Posterior cingulate gyrus (tissue), 11 donors: ENCODE measurements at regions of chr1 and their contacts with region 1.

Region 1: DNA sequence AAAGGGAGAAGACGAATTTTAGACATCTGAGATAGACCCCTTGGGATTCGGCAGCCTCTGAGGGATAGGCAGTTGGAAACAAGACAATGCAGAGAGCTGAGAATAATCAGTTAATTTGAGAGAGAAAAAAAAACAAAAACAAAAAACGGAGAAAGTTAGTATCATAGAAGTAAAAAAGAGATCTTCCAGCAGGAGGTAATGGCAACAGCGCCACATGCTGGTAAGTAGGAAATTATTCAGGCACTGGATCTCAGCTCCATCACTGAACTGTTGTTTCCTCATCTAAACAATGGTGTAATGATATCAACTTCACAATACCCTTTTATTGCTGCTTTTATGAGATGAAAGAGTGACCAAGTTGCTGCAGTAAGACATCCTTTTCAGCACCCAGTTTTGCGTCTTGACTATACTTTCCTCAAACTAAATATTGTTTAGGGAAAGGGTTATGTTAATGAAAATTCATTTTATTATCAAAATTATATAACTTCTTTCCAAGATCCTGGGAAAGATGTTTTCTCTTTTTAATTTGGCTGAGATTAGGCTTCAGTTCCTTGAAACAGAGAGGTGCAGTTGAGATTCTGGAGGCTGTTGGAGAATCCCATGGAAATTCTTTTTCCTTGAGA is 91.4 kb upstream of the KCNA3 start:
- DNase-seq: peak in 5 of 10 donors; percentile 41 to 84 (median 50)

Region 2: DNA sequence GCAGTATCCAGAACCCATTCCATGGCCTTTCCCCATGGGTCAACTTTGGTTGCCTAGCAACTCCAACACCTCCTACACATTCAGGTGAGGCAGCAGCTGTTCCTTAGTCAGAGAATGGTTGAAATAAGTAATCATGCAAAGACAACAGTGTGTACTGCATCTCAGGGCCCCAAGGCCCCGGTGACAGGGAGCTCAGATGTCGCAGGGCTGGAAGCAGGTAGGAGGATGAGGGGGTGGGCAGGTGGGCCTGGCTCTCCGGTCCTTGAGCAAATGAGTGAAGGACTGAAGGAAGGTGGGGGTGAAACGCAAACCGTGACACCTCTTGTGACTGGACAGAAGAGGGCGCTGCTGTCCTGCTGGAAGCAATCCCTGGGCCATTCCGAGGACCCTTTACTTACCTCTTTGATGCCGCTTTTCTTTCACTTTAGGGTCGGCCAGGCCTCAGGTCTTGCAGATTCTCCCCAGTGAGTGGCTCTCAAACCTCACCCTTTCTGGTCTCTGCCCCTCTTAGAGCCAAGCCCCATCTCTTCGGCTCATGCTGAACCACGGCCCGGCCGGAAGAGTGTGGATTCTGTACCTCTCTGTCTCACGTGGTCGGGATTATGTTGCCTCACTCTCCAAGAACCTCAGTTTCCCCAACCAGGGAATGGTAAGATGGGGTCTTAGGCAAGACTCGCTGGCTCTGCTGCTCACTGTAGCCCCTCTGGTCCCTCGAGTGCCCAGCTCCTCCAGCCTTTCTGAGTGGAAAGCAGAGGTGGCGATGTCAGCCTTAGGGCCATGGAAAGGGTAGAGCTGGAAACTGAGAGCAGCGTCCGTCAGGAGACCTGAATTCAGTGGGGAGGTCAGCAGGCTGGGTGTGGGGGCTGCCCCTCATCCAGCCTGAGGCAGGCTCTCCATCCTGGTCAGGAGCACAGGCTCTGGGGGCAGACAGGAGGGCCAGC is 241.6 kb before region 1 on chr1:
- intact Hi-C with region 1: loop called (anchors 5 kb)
- DNase-seq: peak; percentile 39 to 95 (median 70)

Region 3: DNA sequence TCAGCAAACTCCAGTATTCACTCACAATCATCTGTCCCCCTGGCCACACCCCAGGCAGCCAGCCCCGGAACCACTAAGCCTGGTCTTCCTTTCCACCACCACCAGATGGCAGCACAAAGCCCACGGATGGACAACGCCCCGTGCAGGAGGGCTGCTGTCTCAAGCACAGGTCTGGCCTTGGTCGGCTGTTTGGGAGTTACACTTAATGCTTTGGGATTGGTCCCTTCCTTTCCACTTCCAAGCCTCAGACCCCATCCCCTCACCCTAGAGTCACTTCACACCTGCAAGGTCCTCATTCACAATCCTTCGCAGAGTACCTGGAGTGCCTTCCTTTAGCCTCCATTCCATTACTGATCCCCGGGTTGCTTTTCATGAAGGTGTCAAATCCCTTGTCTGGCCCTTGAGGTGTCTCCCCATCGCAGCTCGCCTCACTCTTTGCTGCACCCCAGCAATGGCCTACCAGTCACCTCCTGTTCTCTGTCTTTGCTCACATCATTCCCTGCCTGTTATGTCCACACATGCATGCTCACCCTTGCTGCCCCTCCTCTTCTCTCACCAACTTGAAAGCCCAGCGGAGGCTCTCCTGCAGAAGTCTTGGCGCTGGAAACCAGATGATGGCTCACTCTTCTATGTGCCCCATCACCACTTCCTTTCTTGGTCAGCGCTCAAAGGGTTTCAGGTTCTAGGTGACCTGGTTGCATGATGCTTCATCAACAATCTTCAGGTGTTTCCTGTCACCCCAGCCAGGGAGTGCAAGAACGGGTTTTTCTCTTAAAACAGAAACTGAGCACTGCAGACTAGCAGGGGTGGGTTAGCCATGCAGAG is 135.1 kb before region 1 on chr1:
- intact Hi-C with region 1: loop called (anchors 1 kb)
- DNase-seq: peak; percentile 41 to 96 (median 78)

Region 4: GRCh38 chr1:110783292-110783918 is 17.3 kb after region 1 on chr1:
- intact Hi-C with region 1: no loop called
- DNase-seq: peak in 6 of 10 donors; percentile 30 to 86 (median 44)